Naive thymus-derived CD4-positive, alpha-beta T cell (primary cell): ENCODE measurements at regions of chr4 and their contacts with region 1.

Region 1: GRCh38 chr4:78775303-78776030 is 683 bp upstream of the BMP2K start:
- DNase-seq: peak; percentile 80 to 93 (median 91)
- ATAC-seq: peak; percentile 81
- H3K4me3 ChIP-seq: peak overlapping the region; percentile 87
- H3K4me3 Mint-ChIP-seq: peak overlapping the region; percentile 88 to 97 (median 96)
- H3K27ac ChIP-seq: peak overlapping the region; percentile 78
- H3K27ac Mint-ChIP-seq: peak overlapping the region; percentile 84 to 98 (median 95)
- H3K4me1 ChIP-seq: peaks cover 4 to 14% of the 10 kb centered on the region in 2 donors
- H3K4me1 Mint-ChIP-seq: peaks cover 7 to 34% (median 13%) of the 10 kb centered on the region in 7 donors
- H3K27me3 ChIP-seq: no peaks in the 10 kb centered on the region
- H3K27me3 Mint-ChIP-seq: no peaks in the 10 kb centered on the region

Region 2: DNA sequence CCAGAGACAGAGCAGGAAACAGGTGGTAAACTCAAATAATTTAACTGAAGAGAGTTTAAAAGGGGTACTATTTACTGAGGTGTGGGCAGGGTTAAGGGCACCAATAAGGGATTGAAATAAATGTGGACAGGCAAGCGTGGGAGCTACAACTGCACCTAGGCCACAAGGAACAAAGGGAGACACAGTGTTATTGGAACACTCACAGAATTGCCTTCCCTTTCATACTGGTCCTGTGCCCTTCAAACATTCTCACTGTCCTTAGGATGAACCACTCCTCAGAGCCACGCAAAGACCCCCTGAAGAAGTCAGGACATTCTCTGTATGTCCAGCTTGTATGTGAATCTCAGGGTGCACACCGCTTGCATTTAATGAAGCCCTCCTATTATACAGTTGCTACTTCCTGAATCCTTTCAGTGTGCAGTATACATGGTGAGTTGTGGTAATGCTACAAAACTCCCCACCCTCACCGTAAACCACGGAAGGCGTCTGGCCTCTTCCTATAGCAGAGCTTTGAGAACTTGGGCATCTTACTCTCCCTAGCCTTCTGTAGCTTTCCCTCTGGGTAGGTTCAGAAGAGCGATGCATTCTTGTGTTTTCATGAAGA is 922.5 kb before region 1 on chr4:
- CTCF ChIA-PET with region 1: no interaction called
- POLR2A ChIA-PET with region 1: no interaction called
- intact Hi-C with region 1: loop called in 1 of 2 experiments (anchors 5 kb)
- DNase-seq: peak; percentile 22 to 79 (median 70)
- ATAC-seq: peak; percentile 91
- H3K4me3 ChIP-seq: peak overlapping the region; percentile 50
- H3K4me3 Mint-ChIP-seq: peak overlapping the region; percentile 72 to 93 (median 80)
- H3K27ac ChIP-seq: peak overlapping the region; percentile 77
- H3K27ac Mint-ChIP-seq: peak overlapping the region; percentile 95 to 100 (median 98)
- H3K4me1 ChIP-seq: peaks cover 53 to 57% of the 10 kb centered on the region in 2 donors
- H3K4me1 Mint-ChIP-seq: peaks cover 45 to 62% (median 60%) of the 10 kb centered on the region in 7 donors
- H3K27me3 ChIP-seq: no peaks in the 10 kb centered on the region
- H3K27me3 Mint-ChIP-seq: no peaks in the 10 kb centered on the region

Region 3: GRCh38 chr4:78644744-78645330 is 130.6 kb before region 1 on chr4:
- CTCF ChIA-PET with region 1: no interaction called
- POLR2A ChIA-PET with region 1: interaction called, 3 read pairs
- intact Hi-C with region 1: loop called in 1 of 2 experiments (anchors 1 kb)
- DNase-seq: peak in 7 of 9 donors; percentile 21 to 64 (median 55)
- ATAC-seq: peak; percentile 95
- H3K4me3 ChIP-seq: no peak overlapping the region
- H3K4me3 Mint-ChIP-seq: peak overlapping the region in 1 of 10 donors; percentile 8
- H3K27ac ChIP-seq: no peak overlapping the region
- H3K27ac Mint-ChIP-seq: peak overlapping the region in 1 of 9 donors; percentile 28
- H3K4me1 ChIP-seq: no peaks in the 10 kb centered on the region
- H3K4me1 Mint-ChIP-seq: peaks cover 5 to 31% (median 13%) of the 10 kb centered on the region in 7 donors
- H3K27me3 ChIP-seq: no peaks in the 10 kb centered on the region
- H3K27me3 Mint-ChIP-seq: no peaks in the 10 kb centered on the region

Region 4: GRCh38 chr4:78788005-78788889 is 12.8 kb after region 1 on chr4:
- CTCF ChIA-PET with region 1: interaction called, 4 read pairs
- POLR2A ChIA-PET with region 1: interaction called, 6 read pairs
- intact Hi-C with region 1: loop called in 1 of 2 experiments (anchors 2 kb)
- DNase-seq: no peak
- ATAC-seq: no peak
- H3K4me3 ChIP-seq: no peak overlapping the region
- H3K4me3 Mint-ChIP-seq: no peak overlapping the region
- H3K27ac ChIP-seq: no peak overlapping the region
- H3K27ac Mint-ChIP-seq: no peak overlapping the region
- H3K4me1 ChIP-seq: no peaks in the 10 kb centered on the region
- H3K4me1 Mint-ChIP-seq: peaks cover 6 to 45% (median 27%) of the 10 kb centered on the region in 7 donors
- H3K27me3 ChIP-seq: no peaks in the 10 kb centered on the region
- H3K27me3 Mint-ChIP-seq: no peaks in the 10 kb centered on the region

Region 5: GRCh38 chr4:78870056-78870455 is 94.6 kb after region 1 on chr4:
- CTCF ChIA-PET with region 1: no interaction called
- POLR2A ChIA-PET with region 1: no interaction called
- intact Hi-C with region 1: no loop called
- DNase-seq: no peak
- ATAC-seq: no peak
- H3K4me3 ChIP-seq: no peak overlapping the region
- H3K4me3 Mint-ChIP-seq: no peak overlapping the region
- H3K27ac ChIP-seq: no peak overlapping the region
- H3K27ac Mint-ChIP-seq: no peak overlapping the region
- H3K4me1 ChIP-seq: no peaks in the 10 kb centered on the region
- H3K4me1 Mint-ChIP-seq: no peaks in the 10 kb centered on the region
- H3K27me3 ChIP-seq: no peaks in the 10 kb centered on the region
- H3K27me3 Mint-ChIP-seq: no peaks in the 10 kb centered on the region

Region 6: DNA sequence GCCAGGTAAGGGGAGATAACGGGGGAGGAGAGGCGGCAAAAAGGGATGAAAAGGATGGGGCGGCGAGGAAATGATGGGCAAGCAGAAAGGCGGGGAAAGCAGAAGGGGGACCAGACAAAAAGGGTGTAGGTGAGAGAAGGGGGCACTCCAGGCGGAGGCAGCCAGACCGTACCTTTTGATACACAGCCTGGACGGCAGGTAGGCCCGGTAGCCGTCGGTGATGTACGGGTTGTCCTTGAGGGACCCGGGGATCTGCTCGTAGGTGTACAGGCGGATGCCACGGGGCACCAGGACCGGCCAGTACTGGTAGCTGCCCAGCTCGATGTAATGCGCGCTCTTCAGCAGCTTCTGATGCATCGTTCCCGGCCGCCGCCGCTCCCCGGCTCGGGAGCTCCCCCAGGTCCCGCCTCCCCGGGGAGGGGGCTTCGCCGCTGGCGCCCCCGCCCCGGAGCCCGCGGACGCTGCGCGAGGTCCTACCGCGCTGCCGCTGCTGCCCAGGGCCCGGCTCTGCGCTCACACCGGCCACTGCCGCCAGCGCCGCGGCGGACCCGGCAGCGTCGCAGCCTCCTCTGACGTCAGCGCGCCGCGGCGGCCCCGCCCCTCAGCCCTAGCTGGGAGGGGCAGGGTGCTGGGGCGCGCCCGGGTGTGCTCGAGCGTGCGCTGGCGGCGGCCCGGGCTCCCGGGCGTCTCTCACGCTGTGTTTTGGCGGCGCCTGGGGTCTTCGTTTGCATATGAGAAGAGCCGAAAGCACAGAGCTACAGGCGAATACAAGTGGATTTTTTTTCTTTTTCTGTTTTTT is 163.6 kb after region 1 on chr4 and contains the start of gene PAQR3:
- CTCF ChIA-PET with region 1: no interaction called
- POLR2A ChIA-PET with region 1: no interaction called
- intact Hi-C with region 1: loop called (anchors 1 kb)
- DNase-seq: peak; percentile 70 to 91 (median 86)
- ATAC-seq: peak; percentile 98
- H3K4me3 ChIP-seq: peak within 1 kb of the TSS; percentile 86
- H3K4me3 Mint-ChIP-seq: peak within 1 kb of the TSS; percentile 92 to 100 (median 98)
- H3K27ac ChIP-seq: peak within 1 kb of the TSS; percentile 82
- H3K27ac Mint-ChIP-seq: peak within 1 kb of the TSS; percentile 82 to 97 (median 92)
- H3K4me1 ChIP-seq: peaks cover 5 to 14% of the 10 kb centered on the region in 2 donors
- H3K4me1 Mint-ChIP-seq: peaks cover 23 to 54% (median 39%) of the 10 kb centered on the region in 7 donors
- H3K27me3 ChIP-seq: no peaks in the 10 kb centered on the region
- H3K27me3 Mint-ChIP-seq: peaks cover 8 to 18% (median 11%) of the 10 kb centered on the region in 5 donors
- total RNA-seq, gene PAQR3: 13.1 to 24.3 (median 15.8) TPM

Region 7: GRCh38 chr4:79227860-79228259 is 452.4 kb after region 1 on chr4:
- CTCF ChIA-PET with region 1: no interaction called
- POLR2A ChIA-PET with region 1: no interaction called
- intact Hi-C with region 1: no loop called
- DNase-seq: no peak
- ATAC-seq: no peak
- H3K4me3 ChIP-seq: no peak overlapping the region
- H3K4me3 Mint-ChIP-seq: no peak overlapping the region
- H3K27ac ChIP-seq: no peak overlapping the region
- H3K27ac Mint-ChIP-seq: no peak overlapping the region
- H3K4me1 ChIP-seq: no peaks in the 10 kb centered on the region
- H3K4me1 Mint-ChIP-seq: no peaks in the 10 kb centered on the region
- H3K27me3 ChIP-seq: no peaks in the 10 kb centered on the region
- H3K27me3 Mint-ChIP-seq: peaks cover 0 to 4% (median 0%) of the 10 kb centered on the region in 5 donors

Region 8: GRCh38 chr4:80507507-80507906 is 1732.0 kb after region 1 on chr4:
- CTCF ChIA-PET with region 1: no interaction called
- POLR2A ChIA-PET with region 1: no interaction called
- intact Hi-C with region 1: loop called in 1 of 2 experiments (anchors 10 kb)
- DNase-seq: no peak
- ATAC-seq: no peak
- H3K4me3 ChIP-seq: no peak overlapping the region
- H3K4me3 Mint-ChIP-seq: peak overlapping the region in 1 of 10 donors; percentile 9
- H3K27ac ChIP-seq: no peak overlapping the region
- H3K27ac Mint-ChIP-seq: peak overlapping the region in 5 of 9 donors; percentile 3 to 37 (median 19)
- H3K4me1 ChIP-seq: peaks cover 0 to 15% of the 10 kb centered on the region in 2 donors
- H3K4me1 Mint-ChIP-seq: peaks cover 0 to 65% (median 54%) of the 10 kb centered on the region in 7 donors
- H3K27me3 ChIP-seq: no peaks in the 10 kb centered on the region
- H3K27me3 Mint-ChIP-seq: peaks cover 0 to 3% (median 0%) of the 10 kb centered on the region in 5 donors